Activated CD4-positive, alpha-beta memory T cell treated with anti-CD3 and anti-CD28 coated beads, Interleukin-2, amount 10 ng/mL, durations not matched to agents 7 days and 5 days (primary cell): ENCODE measurements at regions of chr2 and their contacts with region 1.

Region 1: DNA sequence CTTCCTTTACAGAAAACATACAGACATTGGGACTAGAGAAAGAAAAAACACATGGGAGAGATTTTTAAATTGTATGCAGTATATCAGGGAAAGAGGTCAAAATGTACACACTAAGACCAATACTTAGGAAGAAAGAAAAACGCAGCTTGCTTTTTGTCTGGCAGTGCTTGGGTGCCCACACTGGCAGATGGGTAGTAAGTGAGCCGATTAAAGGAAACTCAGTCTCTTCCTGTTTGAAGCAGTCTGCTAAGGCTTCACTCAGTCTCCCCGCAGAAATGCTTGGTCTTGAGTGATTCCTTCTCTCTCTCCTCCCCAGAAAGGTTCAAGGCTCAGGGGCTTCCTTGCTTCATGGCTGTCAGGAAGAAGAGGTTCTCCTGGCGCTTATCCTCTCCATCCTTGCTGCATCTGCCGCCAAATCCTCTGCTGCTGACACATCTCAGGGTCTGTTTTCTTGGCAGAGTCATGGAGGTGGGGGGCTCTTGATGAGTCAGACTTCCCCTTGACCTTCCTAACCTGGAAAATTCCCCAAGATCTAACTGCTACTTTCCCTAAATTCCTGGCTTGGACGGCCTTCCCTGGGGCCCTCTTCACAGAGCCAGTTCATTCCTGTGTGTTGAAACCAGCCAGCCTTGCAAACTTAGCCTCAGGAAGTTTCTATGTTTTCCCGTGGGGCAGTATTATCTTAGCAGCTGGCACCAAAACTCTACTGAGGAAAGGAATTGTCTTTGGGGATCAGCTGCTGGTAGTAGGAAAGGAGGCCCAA is 10.5 kb upstream of the TMSB10 start:
- DNase-seq: no peak
- H3K4me3 Mint-ChIP-seq: peak overlapping the region; percentile 35
- H3K27ac Mint-ChIP-seq: peak overlapping the region; percentile 59
- H3K4me1 Mint-ChIP-seq: peaks cover 62% of the 10 kb centered on the region
- H3K27me3 Mint-ChIP-seq: no peaks in the 10 kb centered on the region

Region 2: DNA sequence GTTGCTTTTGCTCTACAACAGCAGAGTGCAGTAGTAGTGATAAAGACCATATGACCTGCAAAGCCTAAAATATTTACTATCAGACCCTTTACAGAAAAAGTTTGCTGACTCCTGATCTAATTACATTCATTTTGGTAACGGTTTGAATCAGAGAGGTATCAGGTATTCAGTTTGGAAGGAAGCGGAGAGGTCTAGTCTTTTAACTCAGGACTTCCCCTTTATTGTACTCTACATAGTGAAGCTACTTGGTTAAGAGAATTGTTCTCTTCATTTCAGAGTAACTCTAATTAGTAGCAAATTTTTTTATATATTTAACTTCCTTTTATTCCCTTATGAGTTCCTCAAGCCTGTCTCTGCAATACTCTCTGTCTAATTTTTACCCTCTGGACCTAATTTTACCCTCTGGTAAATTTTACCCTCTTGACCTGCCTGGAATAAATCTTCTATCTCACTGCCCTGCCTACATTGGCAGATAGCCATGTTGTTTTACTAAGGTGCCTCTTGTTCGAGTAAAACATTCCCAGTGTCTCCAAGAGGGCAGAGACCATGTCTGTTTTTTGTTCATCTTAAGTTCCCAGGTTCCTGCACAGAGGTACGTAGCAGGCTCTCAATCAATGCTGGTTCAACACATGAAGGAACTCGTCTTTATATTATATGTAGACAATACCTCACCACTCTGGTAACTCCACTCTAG is 208.0 kb before region 1 on chr2:
- CTCF ChIA-PET with region 1: no interaction called
- POLR2A ChIA-PET with region 1: no interaction called
- DNase-seq: no peak
- H3K4me3 Mint-ChIP-seq: no peak overlapping the region
- H3K27ac Mint-ChIP-seq: no peak overlapping the region
- H3K4me1 Mint-ChIP-seq: peaks cover 2% of the 10 kb centered on the region
- H3K27me3 Mint-ChIP-seq: no peaks in the 10 kb centered on the region

Region 3: GRCh38 chr2:84905181-84906107 is 10.5 kb after region 1 on chr2 and contains the start of gene TMSB10:
- CTCF ChIA-PET with region 1: interaction called, 8 read pairs
- POLR2A ChIA-PET with region 1: interaction called, 467 read pairs
- DNase-seq: peak; percentile 91
- H3K4me3 Mint-ChIP-seq: peak within 1 kb of the TSS; percentile 89
- H3K27ac Mint-ChIP-seq: peak within 1 kb of the TSS; percentile 94
- H3K4me1 Mint-ChIP-seq: peaks cover 67% of the 10 kb centered on the region
- H3K27me3 Mint-ChIP-seq: no peaks in the 10 kb centered on the region
- total RNA-seq, gene TMSB10: 5,686 to 5,768 TPM